WTC11 (cell line): ENCODE measurements at regions of chr2 and their contacts with region 1.

Region 1: DNA sequence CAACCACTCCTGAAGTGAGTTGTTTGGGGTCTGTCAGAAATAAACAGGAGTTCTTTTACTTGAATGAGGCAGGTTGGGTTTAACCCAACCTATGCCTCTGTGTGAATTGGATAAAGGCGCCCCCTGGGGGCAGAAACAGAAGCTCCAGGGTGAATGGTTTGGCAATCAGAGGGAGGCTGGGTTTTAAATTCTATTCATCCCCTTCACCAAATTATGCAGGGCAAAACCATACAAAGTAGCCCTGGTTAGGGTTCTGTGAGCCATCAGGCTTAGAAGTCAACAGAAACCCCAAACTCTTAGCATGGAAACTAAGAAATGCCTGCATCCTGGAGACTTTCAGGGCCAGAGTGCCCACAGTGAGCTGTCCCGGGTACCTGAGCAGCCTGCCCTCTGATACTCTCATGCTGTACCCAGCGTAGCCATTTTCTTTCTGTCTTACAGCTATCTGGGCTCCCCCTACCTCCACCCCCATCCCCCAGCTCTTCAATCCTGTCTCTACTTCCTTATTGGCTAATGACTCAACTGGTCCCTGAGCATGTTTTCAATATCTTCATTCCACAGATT is 241.5 kb downstream of the ICOS start:
- DNase-seq: peak; percentile 74
- ATAC-seq: peak; percentile 92
- H3K4me3 Mint-ChIP-seq: no peak overlapping the region
- H3K27ac Mint-ChIP-seq: no peak overlapping the region
- H3K4me1 Mint-ChIP-seq: 0 out of 2 replicates have a peak, but pooled peaks cover 2% of the 10 kb centered on the region
- H3K27me3 Mint-ChIP-seq: no peaks in the 10 kb centered on the region; the same call in 1 of the 2 replicates
- CTCF ChIP-seq: peak; percentile 74

Region 2: DNA sequence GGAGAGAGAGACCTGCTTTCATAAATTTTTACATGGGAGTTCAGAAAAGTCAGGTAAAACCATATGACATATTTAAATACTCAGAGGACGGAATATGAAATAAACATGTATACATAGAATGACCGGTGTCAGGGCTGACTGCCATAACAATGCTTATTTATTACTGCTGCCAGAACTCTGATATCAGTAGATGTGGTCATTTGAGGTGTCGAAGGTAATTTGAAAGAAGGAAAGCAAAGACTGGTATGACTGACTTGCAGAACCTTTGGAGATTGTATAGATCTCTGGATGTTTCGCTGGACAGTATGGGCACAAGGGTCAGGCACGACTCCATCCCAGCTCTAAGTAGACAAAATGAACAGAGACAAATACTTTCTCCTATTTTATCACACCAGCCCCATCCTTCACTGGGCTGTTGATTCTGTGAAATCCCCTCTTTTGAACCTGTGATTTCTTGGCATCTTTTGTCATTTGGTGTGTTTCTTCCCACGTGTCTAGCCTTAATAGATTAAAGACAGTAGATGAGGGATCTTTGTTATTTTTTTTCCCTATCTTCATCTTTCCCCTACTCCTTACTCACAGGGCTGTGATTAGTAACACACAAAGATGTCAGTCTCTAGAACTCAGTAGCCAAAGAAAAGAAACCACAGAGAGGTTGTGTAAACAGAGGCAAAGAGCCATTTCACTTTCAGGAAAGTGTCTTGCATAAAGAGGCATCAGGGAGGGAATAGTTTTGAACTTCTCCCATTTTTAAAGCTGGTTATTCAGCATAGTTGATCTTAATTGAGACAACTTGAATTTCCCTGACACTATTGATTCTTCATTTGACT is 179.9 kb before region 1 on chr2:
- CTCF ChIA-PET with region 1: no interaction called
- POLR2A ChIA-PET with region 1: no interaction called
- DNase-seq: no peak
- ATAC-seq: no peak
- H3K4me3 Mint-ChIP-seq: no peak overlapping the region
- H3K27ac Mint-ChIP-seq: no peak overlapping the region
- H3K4me1 Mint-ChIP-seq: no peaks in the 10 kb centered on the region
- H3K27me3 Mint-ChIP-seq: no peaks in the 10 kb centered on the region
- CTCF ChIP-seq: no peak

Region 3: DNA sequence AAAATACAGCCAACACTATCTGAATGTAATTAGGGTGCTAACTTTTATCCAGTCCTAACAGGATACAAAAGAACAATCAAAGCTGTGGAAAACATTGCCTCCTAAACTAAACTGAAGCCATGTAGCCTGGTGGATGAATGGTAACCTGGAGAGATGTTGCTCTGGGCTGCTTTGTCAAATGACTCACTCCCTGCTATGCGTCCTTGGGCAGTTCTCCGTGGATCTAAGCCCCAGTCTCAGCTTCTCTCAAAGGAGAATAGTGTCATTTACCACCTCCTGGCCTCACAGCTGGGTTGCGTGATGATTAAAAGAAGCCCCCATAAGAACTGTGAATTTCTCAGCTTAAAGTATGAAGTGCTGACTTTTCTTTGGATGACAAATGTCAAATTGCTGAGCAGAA is 37.8 kb before region 1 on chr2:
- CTCF ChIA-PET with region 1: interaction called, 56 read pairs
- POLR2A ChIA-PET with region 1: no interaction called
- DNase-seq: no peak
- ATAC-seq: no peak
- H3K4me3 Mint-ChIP-seq: no peak overlapping the region
- H3K27ac Mint-ChIP-seq: no peak overlapping the region
- H3K4me1 Mint-ChIP-seq: peaks cover 41% of the 10 kb centered on the region
- H3K27me3 Mint-ChIP-seq: peaks cover 7% of the 10 kb centered on the region; the same call in 1 of the 2 replicates
- CTCF ChIP-seq: no peak

Region 4: DNA sequence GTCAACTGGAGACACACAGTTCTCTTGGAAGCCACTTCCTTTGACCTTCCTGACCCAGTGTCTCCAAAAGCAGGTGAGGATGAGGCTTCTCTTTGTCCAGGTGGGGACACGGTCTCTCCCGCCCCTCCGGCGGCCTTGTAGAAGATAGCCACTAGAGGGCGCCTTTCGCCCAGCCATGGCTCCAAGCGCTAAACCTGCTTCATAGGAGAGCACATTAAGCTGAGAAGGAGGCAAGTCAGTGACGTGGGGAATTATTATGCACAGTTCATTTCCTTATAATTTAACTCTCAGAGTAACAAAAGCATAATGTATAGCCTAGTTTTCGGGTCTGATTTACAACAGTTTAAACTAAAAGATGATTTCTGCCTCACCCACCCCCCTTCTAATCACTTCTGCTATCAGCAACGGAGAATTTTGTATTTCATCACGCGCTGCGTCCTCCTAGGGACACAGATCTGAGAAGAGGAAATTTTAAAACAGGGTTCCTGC is 32.8 kb before region 1 on chr2:
- CTCF ChIA-PET with region 1: interaction called, 56 read pairs
- POLR2A ChIA-PET with region 1: no interaction called
- DNase-seq: peak; percentile 87
- ATAC-seq: peak; percentile 95
- H3K4me3 Mint-ChIP-seq: peak overlapping the region; percentile 59
- H3K27ac Mint-ChIP-seq: no peak overlapping the region
- H3K4me1 Mint-ChIP-seq: peaks cover 31% of the 10 kb centered on the region
- H3K27me3 Mint-ChIP-seq: no peaks in the 10 kb centered on the region
- CTCF ChIP-seq: peak; percentile 83

Region 5: DNA sequence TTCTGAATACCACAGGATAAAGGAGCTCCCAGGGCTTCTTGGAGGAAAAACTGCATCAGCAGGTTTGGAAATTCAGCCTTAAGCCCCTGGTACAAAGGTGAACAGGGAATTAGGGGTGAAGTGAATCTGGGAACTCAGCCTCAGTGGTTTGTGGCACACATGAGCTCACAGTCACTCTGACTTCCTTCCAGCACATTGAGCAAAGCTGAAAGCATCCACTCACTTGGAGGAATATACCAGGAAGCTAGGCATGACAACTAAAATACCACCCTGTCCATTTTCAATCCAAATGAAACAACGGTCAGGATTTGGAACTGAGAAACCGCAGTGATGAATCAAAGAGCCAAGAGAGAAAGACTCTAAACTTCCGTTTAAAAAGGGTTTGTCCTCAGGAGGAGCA is 25.4 kb before region 1 on chr2:
- CTCF ChIA-PET with region 1: interaction called, 15 read pairs
- POLR2A ChIA-PET with region 1: no interaction called
- DNase-seq: no peak
- ATAC-seq: no peak
- H3K4me3 Mint-ChIP-seq: no peak overlapping the region
- H3K27ac Mint-ChIP-seq: no peak overlapping the region
- H3K4me1 Mint-ChIP-seq: peaks cover 14% of the 10 kb centered on the region
- H3K27me3 Mint-ChIP-seq: no peaks in the 10 kb centered on the region
- CTCF ChIP-seq: no peak

Region 6: DNA sequence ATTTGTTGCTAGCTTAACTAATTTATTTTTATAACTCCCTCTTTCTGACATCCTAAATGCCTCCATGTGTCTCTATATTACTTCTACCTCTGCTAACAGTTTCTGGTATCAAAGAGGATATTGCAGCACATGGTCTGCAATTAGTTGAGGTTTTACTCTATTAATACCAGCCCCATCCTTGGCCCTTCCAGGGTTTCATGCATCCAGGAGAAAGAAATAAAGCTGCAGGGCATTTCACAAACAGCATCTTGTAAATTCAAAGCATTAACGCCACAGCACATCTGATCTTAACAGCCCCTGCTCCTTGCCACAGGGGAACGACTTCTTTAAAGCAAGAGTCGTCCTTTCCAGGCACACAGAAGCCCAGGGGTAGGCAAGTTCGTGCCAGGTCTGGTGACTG is 17.4 kb after region 1 on chr2:
- CTCF ChIA-PET with region 1: interaction called, 23 read pairs
- POLR2A ChIA-PET with region 1: no interaction called
- DNase-seq: no peak
- ATAC-seq: no peak
- H3K4me3 Mint-ChIP-seq: no peak overlapping the region
- H3K27ac Mint-ChIP-seq: no peak overlapping the region
- H3K4me1 Mint-ChIP-seq: peaks cover 20% of the 10 kb centered on the region
- H3K27me3 Mint-ChIP-seq: peaks cover 5% of the 10 kb centered on the region
- CTCF ChIP-seq: no peak

Region 7: GRCh38 chr2:204205538-204205937 is 27.5 kb after region 1 on chr2:
- CTCF ChIA-PET with region 1: interaction called, 11 read pairs
- POLR2A ChIA-PET with region 1: no interaction called
- DNase-seq: peak; percentile 74
- ATAC-seq: peak; percentile 86
- H3K4me3 Mint-ChIP-seq: peak overlapping the region; percentile 48
- H3K27ac Mint-ChIP-seq: peak overlapping the region; percentile 98
- H3K4me1 Mint-ChIP-seq: peaks cover 42% of the 10 kb centered on the region
- H3K27me3 Mint-ChIP-seq: peaks cover 38% of the 10 kb centered on the region
- CTCF ChIP-seq: no peak

Region 8: DNA sequence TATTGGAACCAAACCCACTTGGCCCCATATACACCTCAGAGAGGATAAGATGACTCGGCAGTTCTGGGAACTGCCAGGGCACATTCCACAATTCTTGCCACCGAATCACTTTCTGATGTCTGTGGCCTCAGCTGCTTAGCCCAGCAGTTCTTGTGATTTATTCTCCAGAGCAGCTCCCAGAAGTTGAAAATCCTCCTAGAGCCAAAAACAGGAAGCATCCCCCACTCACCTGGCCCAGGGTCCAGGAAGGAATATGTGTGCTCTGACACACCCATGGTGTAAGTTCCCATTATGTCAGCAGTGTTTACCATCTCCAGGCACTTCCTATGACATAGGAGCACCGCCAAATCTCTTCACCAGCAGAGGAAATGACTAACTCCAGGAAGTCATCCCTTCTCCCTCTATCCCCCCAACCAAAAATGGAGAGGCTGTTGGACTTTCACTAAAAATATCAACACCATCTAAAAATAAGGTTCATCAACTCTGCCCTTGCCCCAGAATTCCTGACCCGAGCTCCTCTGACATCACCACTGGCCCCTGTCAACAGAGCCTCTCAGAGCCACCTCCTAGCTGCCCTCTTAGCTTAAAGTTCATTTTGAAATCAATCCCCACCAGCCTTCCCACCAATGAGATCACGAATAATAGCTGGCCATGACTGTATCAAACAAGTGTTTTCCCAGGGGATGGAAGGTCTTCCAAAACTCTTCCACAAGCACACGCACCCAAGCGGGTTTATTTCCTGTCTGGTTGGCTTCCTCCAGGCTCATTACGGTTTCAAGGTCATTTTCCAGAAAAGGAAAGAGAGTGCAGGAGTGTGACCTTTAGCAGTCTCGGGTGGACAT is 144.1 kb after region 1 on chr2:
- CTCF ChIA-PET with region 1: no interaction called
- POLR2A ChIA-PET with region 1: no interaction called
- DNase-seq: no peak
- ATAC-seq: no peak
- H3K4me3 Mint-ChIP-seq: no peak overlapping the region
- H3K27ac Mint-ChIP-seq: no peak overlapping the region
- H3K4me1 Mint-ChIP-seq: peaks cover 14% of the 10 kb centered on the region
- H3K27me3 Mint-ChIP-seq: no peaks in the 10 kb centered on the region
- CTCF ChIP-seq: no peak